ENCODE measurements at regions of chr5 and their contacts with region 1.

Region 1: DNA sequence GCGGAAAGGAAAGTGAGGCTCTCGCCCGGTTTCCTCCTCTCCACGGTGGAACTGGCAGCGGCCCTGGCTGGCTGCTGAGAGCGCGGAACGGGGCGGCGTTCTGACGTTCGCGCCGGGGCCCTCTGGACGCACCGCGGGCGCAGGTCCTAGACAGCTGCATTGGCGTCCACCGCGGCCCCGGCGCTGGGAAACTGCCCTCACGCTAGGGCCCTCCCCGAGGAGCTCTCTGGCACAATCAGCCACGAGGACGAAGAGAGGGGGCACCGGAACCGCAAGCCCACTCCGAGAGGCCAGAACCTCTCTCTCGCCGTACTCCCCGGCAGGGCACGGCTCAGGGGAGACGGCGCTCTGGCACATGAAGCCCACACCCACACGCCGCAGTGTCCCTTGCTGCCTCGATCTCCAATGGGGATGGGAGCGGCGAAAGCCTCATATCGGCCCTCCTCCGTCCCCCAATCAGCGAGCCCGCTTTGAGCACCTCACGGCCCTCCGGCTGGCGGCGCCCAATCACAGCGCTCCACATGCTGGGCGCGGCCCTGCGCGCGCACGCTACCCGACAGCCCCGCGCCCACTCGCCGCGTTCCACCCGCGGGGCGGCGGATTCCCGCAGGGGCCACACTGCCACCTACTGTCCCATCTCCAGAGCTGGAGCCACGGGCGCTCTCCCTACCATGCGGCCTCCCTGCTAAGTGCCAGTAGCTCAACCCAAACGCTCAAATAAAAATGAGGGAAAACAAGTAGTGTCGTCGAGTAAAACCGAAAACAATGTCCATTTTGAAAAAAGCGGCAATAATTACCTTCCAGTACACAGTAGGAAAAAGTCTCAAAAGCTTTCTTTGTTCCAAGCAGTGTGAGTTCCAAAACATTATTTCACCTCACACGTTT is 11.8 kb downstream of the MRPS27 start:
- DNase-seq: peak; percentile 96
- H3K4me3 Mint-ChIP-seq: peak overlapping the region; percentile 85
- H3K27ac Mint-ChIP-seq: peak overlapping the region; percentile 96
- H3K4me1 Mint-ChIP-seq: peaks cover 27% of the 10 kb centered on the region
- H3K27me3 Mint-ChIP-seq: no peaks in the 10 kb centered on the region

Region 2: DNA sequence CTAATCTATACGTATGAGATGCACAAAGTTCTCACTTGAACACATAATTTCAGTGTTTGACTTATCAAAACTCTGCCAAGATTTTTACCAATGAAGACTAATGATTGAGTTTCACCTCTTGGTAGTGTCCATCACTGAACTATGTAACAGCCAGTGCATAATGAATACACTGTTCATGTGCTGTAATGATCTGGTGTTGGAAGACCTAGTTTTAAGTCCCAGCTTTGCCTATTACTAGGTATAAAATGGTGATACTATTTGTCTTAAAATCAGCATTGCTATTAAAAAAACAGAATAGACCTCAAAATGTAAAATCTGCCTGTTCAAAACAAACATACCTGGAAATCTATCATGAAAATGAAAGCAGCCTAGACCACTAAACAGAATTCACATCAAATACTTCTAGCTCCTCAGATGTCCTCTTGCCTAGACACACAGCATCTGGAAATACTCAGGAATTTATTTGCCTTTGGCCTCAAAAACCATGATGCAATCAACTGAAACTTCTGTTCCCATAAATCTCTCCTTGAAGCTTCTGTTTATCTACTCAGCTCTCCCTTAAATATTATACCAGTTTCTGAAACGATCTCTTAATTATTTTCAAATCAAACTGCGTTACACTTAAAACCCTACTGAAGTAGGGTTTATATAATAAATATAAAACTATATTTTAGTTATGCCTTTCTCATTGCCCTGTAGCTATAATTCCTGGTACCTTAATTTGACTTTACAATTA is 26.3 kb before region 1 on chr5:
- CTCF ChIA-PET with region 1: interaction called, 10 read pairs
- POLR2A ChIA-PET with region 1: no interaction called
- DNase-seq: no peak
- H3K4me3 Mint-ChIP-seq: no peak overlapping the region
- H3K27ac Mint-ChIP-seq: no peak overlapping the region
- H3K4me1 Mint-ChIP-seq: no peaks in the 10 kb centered on the region
- H3K27me3 Mint-ChIP-seq: no peaks in the 10 kb centered on the region

Region 3: DNA sequence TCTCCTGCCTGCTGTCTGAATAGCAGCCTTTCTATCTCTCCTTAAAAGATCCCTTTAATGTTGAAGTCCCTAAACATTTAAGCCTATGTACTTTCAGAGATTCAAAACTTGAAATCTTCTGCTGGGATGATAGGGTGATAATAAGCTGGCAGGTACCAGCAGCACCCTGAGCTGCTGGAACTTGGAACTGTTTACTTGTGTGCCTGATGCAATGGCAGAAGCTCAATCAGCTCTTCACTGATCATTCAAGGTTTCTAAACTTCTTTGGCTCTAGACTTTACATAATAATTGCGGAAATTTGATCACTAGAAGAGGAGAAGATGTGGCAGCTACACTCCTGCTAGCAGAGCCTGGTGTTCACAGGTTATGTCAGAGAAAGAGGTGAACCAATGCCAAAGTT is 15.8 kb before region 1 on chr5:
- CTCF ChIA-PET with region 1: no interaction called
- POLR2A ChIA-PET with region 1: no interaction called
- DNase-seq: no peak
- H3K4me3 Mint-ChIP-seq: no peak overlapping the region
- H3K27ac Mint-ChIP-seq: no peak overlapping the region
- H3K4me1 Mint-ChIP-seq: peaks cover 1% of the 10 kb centered on the region
- H3K27me3 Mint-ChIP-seq: no peaks in the 10 kb centered on the region

Region 4: GRCh38 chr5:72319976-72320752 is 12.0 kb after region 1 on chr5 and contains the starts of genes MRPS27 and PTCD2:
- CTCF ChIA-PET with region 1: interaction called, 25 read pairs
- POLR2A ChIA-PET with region 1: interaction called, 6 read pairs
- DNase-seq: peak; percentile 97
- H3K4me3 Mint-ChIP-seq: peak within 1 kb of the TSS; percentile 95
- H3K27ac Mint-ChIP-seq: peak within 1 kb of the TSS; percentile 97
- H3K4me1 Mint-ChIP-seq: peaks cover 55% of the 10 kb centered on the region
- H3K27me3 Mint-ChIP-seq: no peaks in the 10 kb centered on the region
- total RNA-seq, gene MRPS27: 49.2 to 63.4 TPM
- total RNA-seq, gene PTCD2: 7.8 to 8.1 TPM